A549 (cell line): ENCODE measurements at regions of chr2 and their contacts with region 1.

Region 1: DNA sequence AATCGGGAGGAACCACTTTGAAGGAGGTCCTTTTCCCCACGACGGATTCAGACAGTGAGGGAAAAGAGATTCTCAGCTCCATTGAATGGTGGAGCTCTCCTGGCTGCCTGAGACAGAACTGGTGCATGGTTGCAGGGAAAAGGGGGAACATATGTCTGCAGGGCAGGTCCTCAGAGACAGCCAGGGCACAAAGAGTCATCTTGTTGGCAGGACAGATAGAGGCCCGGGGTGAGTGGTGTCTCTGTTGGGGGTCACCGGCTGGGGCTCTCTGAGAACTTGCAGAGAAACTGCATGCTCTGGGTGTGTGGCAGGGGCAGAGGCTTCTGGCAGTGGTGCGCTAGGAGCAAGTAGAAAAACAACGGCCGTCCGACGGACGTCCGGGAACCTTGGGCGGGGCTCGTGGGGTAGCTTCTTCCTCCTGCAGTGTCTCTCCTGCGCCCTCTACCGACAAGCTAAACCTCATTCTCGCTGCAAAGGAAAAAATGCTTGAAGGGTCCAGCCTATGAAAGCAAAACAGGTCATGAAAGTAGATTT is 94.3 kb downstream of the CDCA7 start:
- DNase-seq: peak; percentile 73 to 90
- ATAC-seq: peak; percentile 97 to 99
- H3K4me3 ChIP-seq: peak overlapping the region; percentile 38
- H3K27ac ChIP-seq: peak overlapping the region; percentile 80 to 90
- H3K4me1 ChIP-seq: no peaks in the 10 kb centered on the region
- CTCF ChIP-seq: peak; percentile 78
- EP300 ChIP-seq: no peak
- POLR2A ChIP-seq: peak; percentile 55; the same call in 1 of the 2 replicates
- RAD21 ChIP-seq: peak; percentile 82 to 87

Region 2: GRCh38 chr2:173414823-173415322 is 34.1 kb before region 1 on chr2:
- CTCF ChIA-PET with region 1: interaction called, 121 read pairs
- POLR2A ChIA-PET with region 1: no interaction called
- DNase-seq: peak in 1 of 2 experiments; percentile 50
- ATAC-seq: peak; percentile 49 to 68; a peak in 3 of 6 replicates
- H3K4me3 ChIP-seq: no peak overlapping the region
- H3K27ac ChIP-seq: peak overlapping the region; percentile 67
- H3K4me1 ChIP-seq: peaks cover 31% of the 10 kb centered on the region
- CTCF ChIP-seq: no peak
- EP300 ChIP-seq: no peak
- POLR2A ChIP-seq: no peak
- RAD21 ChIP-seq: no peak

Region 3: DNA sequence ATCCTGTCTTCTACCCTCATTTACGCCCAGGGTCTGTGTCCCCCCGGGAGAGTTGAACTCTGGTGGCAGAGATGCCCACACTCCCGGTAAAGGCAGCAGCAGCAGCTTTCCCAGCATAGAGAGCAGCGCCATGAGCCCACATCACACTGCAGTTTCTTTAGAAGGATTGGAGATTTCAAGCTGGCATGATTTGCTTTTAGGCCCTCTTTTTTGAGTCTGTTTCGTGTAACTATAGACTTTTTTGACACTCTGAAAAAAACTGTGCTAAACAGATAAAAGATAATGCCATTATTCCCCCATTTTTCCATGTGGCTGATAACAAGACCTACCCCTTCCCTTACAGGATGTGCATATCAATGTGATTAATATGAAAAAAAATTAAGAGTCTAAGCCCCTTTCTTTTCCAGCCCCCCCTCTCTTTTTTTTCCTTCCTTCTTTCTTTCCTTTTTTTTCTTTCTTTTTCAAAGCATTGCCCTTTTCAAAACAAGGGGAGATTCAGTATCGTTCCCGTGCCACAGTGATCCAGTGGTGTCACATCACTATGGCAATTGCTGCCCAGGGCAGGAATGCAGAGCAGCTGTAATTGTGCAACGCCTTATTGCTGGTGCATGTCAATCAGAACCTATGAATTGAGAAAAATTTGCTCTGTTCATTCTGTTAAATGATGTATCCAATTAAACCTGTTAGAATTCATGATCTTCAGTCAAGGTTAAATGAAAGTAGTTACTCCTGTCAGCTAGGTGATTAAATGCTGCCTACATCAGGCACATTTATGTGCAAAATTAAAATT is 10.2 kb after region 1 on chr2:
- CTCF ChIA-PET with region 1: interaction called, 10 read pairs
- POLR2A ChIA-PET with region 1: no interaction called
- DNase-seq: no peak
- ATAC-seq: no peak
- H3K4me3 ChIP-seq: no peak overlapping the region
- H3K27ac ChIP-seq: no peak overlapping the region
- H3K4me1 ChIP-seq: no peaks in the 10 kb centered on the region
- CTCF ChIP-seq: no peak
- EP300 ChIP-seq: no peak
- POLR2A ChIP-seq: no peak
- RAD21 ChIP-seq: no peak

Region 4: GRCh38 chr2:173568054-173568453 is 119.0 kb after region 1 on chr2:
- CTCF ChIA-PET with region 1: interaction called, 12 read pairs
- POLR2A ChIA-PET with region 1: no interaction called
- DNase-seq: peak in 1 of 2 experiments; percentile 65
- ATAC-seq: peak; percentile 70 to 85; a peak in 4 of 6 replicates
- H3K4me3 ChIP-seq: no peak overlapping the region
- H3K27ac ChIP-seq: 0 out of 6 replicates have a peak overlapping the region, but pooled peaks of 1 of the 2 experiments have one; percentile 14
- H3K4me1 ChIP-seq: peaks cover 21% of the 10 kb centered on the region
- CTCF ChIP-seq: peak; percentile 53
- EP300 ChIP-seq: no peak
- POLR2A ChIP-seq: no peak
- RAD21 ChIP-seq: peak; percentile 64 to 80